ENCODE measurements at regions of chr1 and their contacts with region 1.

Region 1: DNA sequence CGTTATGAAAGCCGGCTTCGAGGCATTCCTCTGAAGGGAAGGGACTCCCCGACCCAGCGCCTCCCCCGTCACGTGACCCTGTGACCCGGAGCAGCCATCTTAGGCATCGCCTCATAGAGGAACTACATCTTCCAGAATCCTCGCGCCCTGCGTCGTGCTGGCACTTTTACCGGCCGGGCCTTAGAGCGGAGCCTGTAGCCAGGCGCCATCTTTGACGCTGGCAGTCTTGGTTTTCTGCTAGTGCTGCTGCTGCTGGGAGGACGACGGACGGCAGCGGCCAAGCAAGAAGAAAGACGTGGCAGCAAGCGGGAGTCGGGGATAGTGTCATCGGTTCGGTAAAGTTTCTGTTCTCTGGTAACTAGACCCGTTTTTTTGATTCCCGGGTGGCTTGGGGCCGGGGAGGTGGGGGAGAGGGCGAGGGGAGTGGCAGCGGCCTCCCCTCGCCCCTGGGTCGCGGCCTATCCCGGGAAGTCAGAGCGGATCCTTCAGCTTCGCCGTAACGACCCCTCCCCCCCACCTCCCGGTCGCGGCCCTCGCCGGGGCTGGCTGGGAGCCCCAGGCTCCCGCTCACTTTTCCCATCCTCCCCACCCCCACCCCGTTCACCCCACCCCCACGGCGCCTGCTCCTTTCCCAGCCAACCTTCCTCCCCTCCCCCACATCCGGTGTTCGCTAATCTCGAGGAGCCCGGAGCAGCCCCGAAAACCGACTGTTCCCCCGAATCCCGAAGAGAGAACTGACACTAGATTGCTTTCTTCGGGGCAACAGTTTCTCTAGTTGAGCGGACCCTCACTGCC is at the starts of genes ZBED6 and ZC3H11A:
- DNase-seq: peak; percentile 100
- H3K4me3 ChIP-seq: peak within 1 kb of the TSS; percentile 68 to 90 (median 78)
- H3K27ac ChIP-seq: peak within 1 kb of the TSS; percentile 92 to 99 (median 96)
- H3K4me1 ChIP-seq: peaks cover 0 to 46% (median 44%) of the 10 kb centered on the region in 4 donors
- H3K27me3 ChIP-seq: no peaks in the 10 kb centered on the region
- CTCF ChIP-seq: no peak
- EP300 ChIP-seq: peak in 1 of 4 donors; percentile 65
- POLR2A ChIP-seq: peak; percentile 59 to 65
- total RNA-seq, gene ZBED6: 11.0 to 21.4 (median 19.6) TPM
- total RNA-seq, gene ZC3H11A: 84.9 to 111 (median 88.6) TPM

Region 2: DNA sequence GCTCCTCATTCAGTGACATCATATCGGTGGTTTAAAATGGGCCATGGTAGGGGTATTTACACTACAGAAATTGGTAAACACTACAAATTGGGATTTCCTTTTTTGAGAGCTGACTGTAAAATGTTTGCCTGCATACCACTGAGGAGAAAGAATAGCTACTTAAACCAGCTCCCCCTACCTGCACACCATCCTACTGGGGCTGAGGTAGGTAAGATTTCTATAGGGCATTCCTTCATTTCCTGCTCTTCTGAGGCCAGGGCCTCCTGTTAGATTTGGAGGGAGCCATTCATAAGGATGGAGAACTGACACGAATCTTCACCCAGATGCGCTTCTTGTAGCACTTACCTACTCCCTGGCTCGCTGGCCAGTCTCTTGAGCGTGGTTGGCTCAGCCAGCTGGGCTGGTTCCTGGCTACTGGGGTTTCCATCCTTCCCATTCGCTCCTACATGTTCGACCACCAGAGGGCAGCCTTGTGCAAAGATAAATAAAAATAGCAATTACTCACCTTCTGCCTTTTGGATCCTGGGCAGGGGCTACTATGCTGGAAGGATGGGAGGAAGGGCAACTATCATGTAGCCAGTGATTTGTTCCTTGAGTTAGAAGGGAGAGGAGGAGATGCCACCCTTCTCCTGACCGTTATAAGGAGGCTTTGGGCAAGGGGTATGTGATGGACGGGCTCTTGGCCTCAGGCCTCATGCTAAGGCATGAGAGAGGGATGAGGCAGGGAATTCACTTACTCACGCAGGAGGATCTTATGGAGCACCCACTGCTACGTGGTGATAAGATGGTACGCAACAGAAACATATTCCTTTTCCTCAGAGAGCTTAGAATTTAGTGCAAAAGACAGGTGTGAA is 291.0 kb before region 1 on chr1:
- intact Hi-C with region 1: loop called (anchors 5 kb)
- DNase-seq: peak; percentile 94
- H3K4me3 ChIP-seq: no peak overlapping the region
- H3K27ac ChIP-seq: peak overlapping the region; percentile 7 to 94 (median 86)
- H3K4me1 ChIP-seq: peaks cover 3 to 79% (median 64%) of the 10 kb centered on the region in 4 donors
- H3K27me3 ChIP-seq: no peaks in the 10 kb centered on the region
- CTCF ChIP-seq: peak; percentile 56 to 87 (median 84)
- EP300 ChIP-seq: no peak
- POLR2A ChIP-seq: no peak

Region 3: DNA sequence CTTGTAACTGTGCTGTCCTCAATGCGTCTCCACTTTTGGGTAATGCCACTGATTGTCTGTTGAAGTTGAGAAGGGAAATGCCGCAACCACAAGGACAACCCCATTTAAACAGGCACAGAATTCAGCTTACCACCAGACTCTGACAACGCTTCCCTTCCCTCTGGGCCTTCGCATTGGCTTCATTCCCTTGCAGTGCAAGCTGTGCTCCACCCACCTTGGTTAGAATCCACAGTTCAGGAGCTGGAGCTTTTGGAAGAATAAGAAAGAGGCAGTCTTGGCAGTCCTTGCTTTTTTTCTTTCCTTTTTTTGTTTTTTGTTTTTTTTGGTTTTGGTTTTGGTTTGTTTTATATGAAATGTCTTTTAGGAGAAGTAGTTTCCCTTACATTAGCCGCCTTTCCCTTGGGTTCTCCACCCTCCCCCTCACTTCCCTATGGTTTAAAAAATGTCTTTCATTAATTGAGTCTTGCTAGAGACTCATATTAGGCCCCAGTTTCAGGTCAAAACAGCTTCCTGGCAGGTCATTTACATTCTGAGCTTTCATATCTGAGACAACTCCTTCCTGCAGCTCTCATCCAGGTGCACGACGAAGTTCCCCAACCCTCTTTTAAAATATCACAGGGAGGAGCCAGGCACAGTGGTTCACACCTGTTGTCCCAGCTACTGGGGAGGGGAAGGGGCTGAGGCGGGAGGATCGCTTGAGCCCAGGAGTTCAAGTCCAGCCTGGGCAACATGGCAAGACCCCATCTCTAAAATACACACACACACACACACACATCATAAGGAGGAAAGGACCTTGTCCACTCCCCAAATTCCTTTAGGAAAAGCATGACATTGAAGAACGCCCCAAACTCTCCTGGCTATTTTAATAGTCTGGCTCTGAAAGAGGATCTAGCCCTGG is 51.3 kb before region 1 on chr1:
- intact Hi-C with region 1: loop called (anchors 5 kb)
- DNase-seq: peak; percentile 89
- H3K4me3 ChIP-seq: no peak overlapping the region
- H3K27ac ChIP-seq: peak overlapping the region; percentile 29 to 44 (median 40)
- H3K4me1 ChIP-seq: peaks cover 0 to 22% (median 12%) of the 10 kb centered on the region in 4 donors
- H3K27me3 ChIP-seq: no peaks in the 10 kb centered on the region
- CTCF ChIP-seq: no peak
- EP300 ChIP-seq: no peak
- POLR2A ChIP-seq: no peak

Region 4: GRCh38 chr1:203769505-203770343 is 25.9 kb before region 1 on chr1:
- intact Hi-C with region 1: loop called (anchors 2 kb)
- DNase-seq: peak; percentile 92
- H3K4me3 ChIP-seq: peak overlapping the region in 2 of 4 donors; percentile 21 to 31
- H3K27ac ChIP-seq: peak overlapping the region; percentile 49 to 74 (median 63)
- H3K4me1 ChIP-seq: peaks cover 0 to 34% (median 22%) of the 10 kb centered on the region in 4 donors
- H3K27me3 ChIP-seq: no peaks in the 10 kb centered on the region
- CTCF ChIP-seq: no peak
- EP300 ChIP-seq: peak in 1 of 4 donors; percentile 8
- POLR2A ChIP-seq: no peak

Region 5: DNA sequence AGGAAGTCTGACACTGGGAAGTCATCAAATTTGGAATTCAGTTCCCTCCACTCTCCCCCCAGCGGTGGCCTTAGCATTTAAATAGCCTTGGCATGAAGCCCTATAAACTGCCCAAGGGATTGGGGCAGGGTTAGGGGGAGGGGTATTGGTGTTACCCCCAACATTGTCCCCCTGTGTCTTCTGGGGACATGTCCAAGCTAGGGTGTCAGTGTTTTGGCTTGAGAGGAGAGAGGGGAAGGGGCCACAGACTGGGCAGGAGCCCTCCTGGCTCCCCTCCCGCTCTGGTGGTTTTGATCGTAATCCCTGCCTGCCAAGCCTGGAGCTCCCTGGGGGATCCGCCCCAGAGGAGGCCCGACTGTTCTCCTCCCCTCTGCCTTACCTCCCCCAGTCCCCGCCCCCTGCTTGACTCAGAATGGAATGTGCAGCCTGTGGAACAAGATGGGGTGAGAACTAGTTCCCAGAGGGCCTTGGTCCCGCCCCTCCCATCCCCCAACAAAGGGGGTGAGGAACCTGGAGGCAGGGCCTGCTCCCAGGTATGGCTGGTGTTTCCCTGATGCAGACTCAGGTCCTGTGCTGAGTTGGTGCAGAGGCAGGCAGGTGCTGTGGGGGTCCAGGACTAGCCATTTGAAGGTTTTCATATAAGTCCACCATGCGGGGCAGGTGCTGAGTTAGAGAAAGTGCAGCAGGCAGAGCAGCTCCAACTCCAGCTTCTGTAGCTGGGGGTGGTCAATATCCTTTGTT is 284.7 kb after region 1 on chr1:
- intact Hi-C with region 1: loop called (anchors 10 kb)
- DNase-seq: peak; percentile 92
- H3K4me3 ChIP-seq: peak overlapping the region in 1 of 4 donors; percentile 20
- H3K27ac ChIP-seq: peak overlapping the region; percentile 57 to 98 (median 96)
- H3K4me1 ChIP-seq: peaks cover 0 to 95% (median 88%) of the 10 kb centered on the region in 4 donors
- H3K27me3 ChIP-seq: no peaks in the 10 kb centered on the region
- CTCF ChIP-seq: no peak
- EP300 ChIP-seq: no peak
- POLR2A ChIP-seq: no peak

Measured in sigmoid colon (tissue), 7 donors.